Testis (tissue), 5 donors: ENCODE measurements at regions of chr2 and their contacts with region 1.

Region 1: DNA sequence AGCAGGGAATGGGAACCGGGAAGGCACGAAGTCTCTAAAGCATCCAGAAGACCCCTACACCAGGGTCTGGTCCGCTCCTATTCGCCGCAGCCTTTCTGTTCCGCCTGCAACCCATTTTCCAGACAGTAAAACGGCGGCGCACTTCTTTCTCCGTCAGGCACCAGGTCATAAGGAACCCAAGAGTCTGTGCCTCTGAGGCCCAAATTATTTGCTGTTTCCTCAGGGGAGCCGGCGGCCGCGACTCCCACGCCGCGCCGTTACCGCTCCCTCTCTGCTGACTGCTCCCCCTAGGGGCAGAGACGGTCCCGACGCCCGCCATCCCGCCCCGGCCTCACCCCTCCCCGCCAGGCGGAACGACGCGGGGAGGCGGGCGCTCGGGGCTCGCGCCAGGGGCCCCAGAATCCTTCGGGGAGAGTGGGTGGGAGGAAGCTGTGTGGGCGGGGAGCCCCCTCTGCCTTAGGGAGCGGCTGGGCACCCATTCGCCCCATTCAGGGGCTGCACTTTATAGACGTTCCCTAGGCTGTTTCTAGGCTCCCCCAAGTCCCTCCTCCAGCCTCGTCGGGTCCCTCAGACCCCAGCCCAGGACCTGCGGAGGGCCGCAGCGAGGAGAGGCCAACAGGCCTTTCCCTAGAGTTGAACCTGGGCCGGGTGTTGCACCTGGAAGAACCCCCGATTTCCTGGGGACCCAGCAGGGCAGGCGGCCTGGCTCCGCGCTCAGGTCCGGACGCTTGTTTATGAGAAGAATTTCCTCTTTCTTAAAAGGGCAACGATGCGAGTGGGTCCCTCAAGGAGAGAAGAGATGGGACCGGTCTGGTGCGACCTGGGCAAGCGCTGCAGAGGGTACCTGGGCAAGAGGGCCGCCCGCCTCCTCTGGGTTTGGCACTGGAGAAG is 3.6 kb upstream of the CTDSP1 start:
- DNase-seq: peak; percentile 92
- H3K4me3 ChIP-seq: peak overlapping the region; percentile 97 to 99
- H3K27ac ChIP-seq: peak overlapping the region; percentile 98 to 99
- H3K4me1 ChIP-seq: peaks cover 22% of the 10 kb centered on the region
- H3K27me3 ChIP-seq: no peaks in the 10 kb centered on the region
- CTCF ChIP-seq: peak; percentile 88 to 95 (median 94)
- POLR2A ChIP-seq: no peak

Region 2: DNA sequence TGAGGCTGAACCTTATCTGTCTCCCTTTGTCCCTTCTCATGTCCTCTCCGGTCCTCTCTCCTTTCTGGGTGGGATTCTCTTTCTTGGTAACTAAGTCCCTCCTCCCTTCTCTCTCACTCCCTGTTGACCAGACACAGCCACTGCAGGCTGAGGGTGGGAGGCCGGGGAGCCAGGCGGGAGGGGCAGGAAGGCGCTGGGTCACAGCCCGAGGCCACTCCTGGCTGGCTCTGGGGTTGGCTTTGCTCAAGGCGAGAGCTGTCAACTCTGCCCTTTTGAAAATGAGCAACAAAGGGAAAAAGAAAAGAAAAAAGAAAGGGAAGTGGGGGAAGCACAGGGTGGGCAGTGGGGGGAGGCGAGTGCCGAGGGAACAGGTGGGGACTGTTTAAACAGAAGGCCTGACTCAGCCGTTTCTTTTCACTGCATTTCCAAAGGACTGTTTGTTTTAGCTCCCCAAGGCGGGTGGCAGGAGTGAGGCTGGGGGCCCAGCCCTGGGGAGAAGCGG is 1630.2 kb before region 1 on chr2:
- intact Hi-C with region 1: no loop called
- DNase-seq: no peak
- H3K4me3 ChIP-seq: no peak overlapping the region
- H3K27ac ChIP-seq: no peak overlapping the region
- H3K4me1 ChIP-seq: no peaks in the 10 kb centered on the region
- H3K27me3 ChIP-seq: no peaks in the 10 kb centered on the region
- CTCF ChIP-seq: no peak
- POLR2A ChIP-seq: no peak

Region 3: DNA sequence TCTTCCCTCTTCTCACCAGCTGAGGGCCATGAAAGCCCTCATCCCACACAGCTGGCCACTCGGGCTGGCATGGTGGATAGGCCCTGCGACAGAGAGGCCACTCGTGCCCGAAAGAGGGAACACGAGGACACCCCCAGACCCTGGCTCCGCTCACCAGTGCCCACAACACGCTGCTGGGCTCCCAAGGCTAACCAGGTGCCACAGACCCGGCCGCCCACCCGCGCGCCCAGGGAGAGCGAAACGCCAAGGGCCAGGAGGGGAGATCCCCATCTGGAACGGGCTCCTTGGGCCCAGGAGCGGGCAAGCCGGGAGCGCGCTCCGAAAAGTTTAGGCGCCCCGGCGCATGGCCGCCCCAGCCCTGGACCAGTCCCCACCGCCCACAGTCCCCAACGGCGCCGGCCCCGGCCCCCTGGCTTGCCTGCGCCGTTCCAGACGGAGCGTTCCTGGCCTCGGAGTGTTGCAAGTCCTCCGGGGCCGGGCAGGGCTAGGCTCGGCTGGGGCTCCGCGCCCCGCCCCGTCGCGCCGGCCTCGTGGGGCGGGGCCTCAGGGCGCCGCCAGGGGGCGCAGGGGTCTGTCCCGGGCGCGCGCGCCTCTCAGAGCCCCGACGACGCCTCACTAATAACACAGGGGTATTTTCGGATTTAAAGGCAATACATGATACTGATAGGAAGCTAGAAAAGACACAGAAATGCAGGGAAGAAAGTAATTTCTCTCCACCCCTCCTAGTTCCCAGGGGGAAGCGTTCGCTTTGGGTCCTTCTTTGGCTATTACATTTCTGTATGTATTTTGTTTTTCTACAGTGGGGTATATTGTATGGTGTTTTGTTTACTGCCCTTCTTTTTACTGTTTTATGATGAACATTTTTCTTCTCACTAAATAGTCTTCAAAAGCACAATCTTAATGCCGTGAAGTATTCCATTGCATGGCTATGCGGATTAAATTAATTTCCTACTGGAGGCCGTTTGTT is 103.7 kb before region 1 on chr2 and contains the start of gene TMBIM1:
- intact Hi-C with region 1: loop called (anchors 5 kb)
- DNase-seq: peak; percentile 85
- H3K4me3 ChIP-seq: peak within 1 kb of the TSS; percentile 81 to 98
- H3K27ac ChIP-seq: peak within 1 kb of the TSS; percentile 88 to 96
- H3K4me1 ChIP-seq: peaks cover 38% of the 10 kb centered on the region
- H3K27me3 ChIP-seq: no peaks in the 10 kb centered on the region
- CTCF ChIP-seq: peak; percentile 87 to 93 (median 90)
- POLR2A ChIP-seq: peak; percentile 62
- total RNA-seq, gene TMBIM1: 59.9 to 81.0 TPM